IMR-90 (cell line): ENCODE measurements at regions of chr2 and their contacts with region 1.

Region 1: DNA sequence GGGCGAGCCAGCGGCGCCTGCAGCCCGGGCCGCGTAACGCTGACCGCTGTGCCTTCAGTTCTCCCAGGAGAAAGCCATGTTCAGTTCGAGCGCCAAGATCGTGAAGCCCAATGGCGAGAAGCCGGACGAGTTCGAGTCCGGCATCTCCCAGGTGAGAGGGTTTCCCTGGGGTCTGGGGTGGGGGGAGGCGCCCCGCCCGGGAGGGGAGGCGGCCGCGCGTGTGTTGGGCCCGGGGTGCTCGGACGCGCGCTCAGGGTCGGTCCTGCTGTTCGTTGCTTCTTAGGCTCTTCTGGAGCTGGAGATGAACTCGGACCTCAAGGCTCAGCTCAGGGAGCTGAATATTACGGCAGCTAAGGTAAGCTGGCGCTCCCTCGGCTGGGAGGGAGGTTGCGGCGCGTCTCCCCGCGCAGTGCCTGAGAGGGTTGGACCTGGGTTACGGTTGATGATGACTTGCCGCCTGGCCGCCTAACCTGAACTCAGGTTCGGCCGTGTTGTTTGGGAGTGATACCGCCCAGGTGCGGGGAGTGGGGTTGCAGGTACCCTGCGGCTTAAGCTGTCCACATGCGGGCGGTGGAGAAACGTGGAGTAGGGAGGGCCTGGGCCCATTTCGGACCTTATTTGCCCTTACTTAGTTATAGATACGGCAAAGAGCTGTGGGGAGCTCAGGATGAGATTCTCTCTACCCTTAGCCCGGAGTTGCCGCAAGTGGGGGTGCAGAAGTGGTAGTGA is 638 bp downstream of the RPS7 start:
- DNase-seq: no peak
- ATAC-seq: peak; percentile 38
- H3K4me3 ChIP-seq: peak overlapping the region; percentile 98
- H3K27ac ChIP-seq: peak overlapping the region; percentile 77
- H3K4me1 ChIP-seq: peaks cover 2% of the 10 kb centered on the region
- H3K27me3 ChIP-seq: no peaks in the 10 kb centered on the region
- CTCF ChIP-seq: no peak
- POLR2A ChIP-seq: no peak
- RAD21 ChIP-seq: no peak

Region 2: GRCh38 chr2:3233877-3234276 is 341.8 kb before region 1 on chr2:
- CTCF ChIA-PET with region 1: no interaction called
- POLR2A ChIA-PET with region 1: no interaction called
- dilution Hi-C with region 1: no loop called
- in situ Hi-C with region 1: no loop called
- intact Hi-C with region 1: no loop called
- DNase-seq: no peak
- ATAC-seq: no peak
- H3K4me3 ChIP-seq: no peak overlapping the region
- H3K27ac ChIP-seq: no peak overlapping the region
- H3K4me1 ChIP-seq: no peaks in the 10 kb centered on the region
- H3K27me3 ChIP-seq: no peaks in the 10 kb centered on the region
- CTCF ChIP-seq: no peak
- POLR2A ChIP-seq: no peak
- RAD21 ChIP-seq: no peak

Region 3: GRCh38 chr2:3536682-3537632 is 38.7 kb before region 1 on chr2:
- CTCF ChIA-PET with region 1: no interaction called
- POLR2A ChIA-PET with region 1: no interaction called
- dilution Hi-C with region 1: no loop called
- in situ Hi-C with region 1: no loop called
- intact Hi-C with region 1: loop called (anchors 1 kb)
- DNase-seq: peak; percentile 56
- ATAC-seq: peak; percentile 55
- H3K4me3 ChIP-seq: peak overlapping the region; percentile 43
- H3K27ac ChIP-seq: peak overlapping the region; percentile 99
- H3K4me1 ChIP-seq: peaks cover 13% of the 10 kb centered on the region
- H3K27me3 ChIP-seq: no peaks in the 10 kb centered on the region
- CTCF ChIP-seq: peak; percentile 52
- POLR2A ChIP-seq: no peak
- RAD21 ChIP-seq: peak; percentile 34; the same call in 1 of the 2 replicates

Region 4: GRCh38 chr2:3970791-3971652 is 395.3 kb after region 1 on chr2:
- CTCF ChIA-PET with region 1: no interaction called
- POLR2A ChIA-PET with region 1: no interaction called
- dilution Hi-C with region 1: no loop called
- in situ Hi-C with region 1: no loop called
- intact Hi-C with region 1: no loop called
- DNase-seq: no peak
- ATAC-seq: no peak
- H3K4me3 ChIP-seq: no peak overlapping the region
- H3K27ac ChIP-seq: no peak overlapping the region
- H3K4me1 ChIP-seq: no peaks in the 10 kb centered on the region
- H3K27me3 ChIP-seq: no peaks in the 10 kb centered on the region
- CTCF ChIP-seq: no peak
- POLR2A ChIP-seq: no peak
- RAD21 ChIP-seq: no peak